Activated CD8-positive, alpha-beta T cell treated with anti-CD3 and anti-CD28 coated beads, Interleukin-2, amount 10 ng/mL, durations not matched to agents 7 days and 5 days (primary cell): ENCODE measurements at regions of chr12 and their contacts with region 1.

Region 1: DNA sequence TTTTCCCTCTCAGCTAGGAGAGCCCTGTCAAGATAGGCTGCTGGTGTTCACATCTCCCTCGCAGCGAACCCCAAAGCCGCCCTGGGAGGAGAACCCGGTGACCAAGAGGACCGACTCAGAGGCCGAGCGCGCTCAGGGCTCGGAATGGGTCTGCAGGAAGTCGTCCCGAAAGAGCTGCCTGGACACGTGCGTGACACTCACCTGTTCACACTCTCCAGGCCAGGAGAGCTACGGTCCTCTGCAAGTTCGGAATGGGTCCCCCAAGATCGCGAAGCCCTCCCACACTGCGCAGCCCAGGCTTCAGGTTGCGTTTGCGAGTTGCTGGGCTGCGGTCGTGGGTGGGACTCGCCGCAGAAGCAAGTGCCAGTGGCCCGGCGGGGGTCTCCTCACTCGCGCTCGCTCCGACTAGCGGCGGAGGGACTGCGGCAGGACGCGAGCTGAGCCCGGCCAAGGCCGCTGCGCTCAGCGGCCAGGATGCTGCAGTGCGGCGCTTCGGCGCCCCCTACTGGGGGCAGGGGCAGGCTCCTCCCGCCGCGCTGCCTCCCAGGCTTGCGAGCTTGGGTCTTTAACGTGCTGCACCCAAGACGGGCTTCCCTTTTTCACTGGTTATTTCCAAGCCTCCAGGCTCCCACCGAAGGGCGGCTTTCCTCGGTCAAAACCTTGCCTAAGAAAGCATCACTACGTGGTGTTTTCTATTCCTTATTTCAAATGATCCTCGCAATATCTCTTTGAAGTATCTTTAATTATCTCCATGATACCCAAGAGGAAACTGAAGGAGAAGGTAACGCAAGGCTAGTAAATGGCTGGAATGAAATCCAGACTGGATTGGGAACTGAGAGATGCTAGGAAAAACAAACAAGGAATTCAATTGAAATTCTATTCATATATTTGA is at the start of gene RERG:
- DNase-seq: peak; percentile 76
- ATAC-seq: peak; percentile 100
- H3K4me3 Mint-ChIP-seq: peak within 1 kb of the TSS; percentile 52
- H3K27ac Mint-ChIP-seq: no peak within 1 kb of the TSS
- H3K4me1 Mint-ChIP-seq: peaks cover 6% of the 10 kb centered on the region
- H3K27me3 Mint-ChIP-seq: peaks cover 35% of the 10 kb centered on the region
- total RNA-seq, gene RERG: not detected

Region 2: GRCh38 chr12:14723763-14724162 is 497.5 kb before region 1 on chr12:
- CTCF ChIA-PET with region 1: interaction called, 21 read pairs
- POLR2A ChIA-PET with region 1: no interaction called
- DNase-seq: peak; percentile 68
- ATAC-seq: peak; percentile 76
- H3K4me3 Mint-ChIP-seq: no peak overlapping the region
- H3K27ac Mint-ChIP-seq: no peak overlapping the region
- H3K4me1 Mint-ChIP-seq: no peaks in the 10 kb centered on the region
- H3K27me3 Mint-ChIP-seq: peaks cover 3% of the 10 kb centered on the region

Region 3: GRCh38 chr12:14845350-14845750 is 375.9 kb before region 1 on chr12:
- CTCF ChIA-PET with region 1: interaction called, 18 read pairs
- POLR2A ChIA-PET with region 1: no interaction called
- DNase-seq: peak; percentile 61
- ATAC-seq: peak; percentile 53
- H3K4me3 Mint-ChIP-seq: no peak overlapping the region
- H3K27ac Mint-ChIP-seq: peak overlapping the region; percentile 0
- H3K4me1 Mint-ChIP-seq: peaks cover 4% of the 10 kb centered on the region
- H3K27me3 Mint-ChIP-seq: no peaks in the 10 kb centered on the region

Region 4: GRCh38 chr12:15186597-15186996 is 34.6 kb before region 1 on chr12:
- CTCF ChIA-PET with region 1: interaction called, 19 read pairs
- POLR2A ChIA-PET with region 1: no interaction called
- DNase-seq: no peak
- ATAC-seq: no peak
- H3K4me3 Mint-ChIP-seq: no peak overlapping the region
- H3K27ac Mint-ChIP-seq: no peak overlapping the region
- H3K4me1 Mint-ChIP-seq: no peaks in the 10 kb centered on the region
- H3K27me3 Mint-ChIP-seq: peaks cover 4% of the 10 kb centered on the region

Region 5: GRCh38 chr12:15196678-15197505 is 24.3 kb before region 1 on chr12:
- CTCF ChIA-PET with region 1: interaction called, 15 read pairs
- POLR2A ChIA-PET with region 1: no interaction called
- DNase-seq: no peak
- ATAC-seq: no peak
- H3K4me3 Mint-ChIP-seq: no peak overlapping the region
- H3K27ac Mint-ChIP-seq: no peak overlapping the region
- H3K4me1 Mint-ChIP-seq: no peaks in the 10 kb centered on the region
- H3K27me3 Mint-ChIP-seq: peaks cover 10% of the 10 kb centered on the region

Region 6: DNA sequence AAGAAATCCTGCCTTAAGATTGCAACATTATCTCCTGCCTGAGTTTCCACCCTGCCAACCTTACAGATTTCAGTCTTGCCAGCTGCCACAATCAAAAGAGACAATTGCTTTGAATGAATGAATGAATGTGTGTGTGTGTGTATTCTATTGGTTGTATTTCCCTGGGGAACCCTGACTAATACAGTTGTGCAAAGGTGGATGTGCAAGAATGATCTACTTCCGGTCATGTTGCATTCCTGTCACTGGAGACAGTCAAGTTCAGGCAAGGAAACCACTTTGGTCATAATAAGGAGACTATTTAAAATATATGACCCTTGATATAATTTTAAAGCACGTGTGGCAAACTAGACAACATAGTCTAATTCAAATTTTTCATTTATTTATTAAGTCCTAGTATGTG is 13.1 kb before region 1 on chr12:
- CTCF ChIA-PET with region 1: interaction called, 14 read pairs
- POLR2A ChIA-PET with region 1: no interaction called
- DNase-seq: no peak
- ATAC-seq: no peak
- H3K4me3 Mint-ChIP-seq: no peak overlapping the region
- H3K27ac Mint-ChIP-seq: no peak overlapping the region
- H3K4me1 Mint-ChIP-seq: no peaks in the 10 kb centered on the region
- H3K27me3 Mint-ChIP-seq: peaks cover 13% of the 10 kb centered on the region

Region 7: GRCh38 chr12:15268927-15269552 is 47.8 kb after region 1 on chr12:
- CTCF ChIA-PET with region 1: interaction called, 12 read pairs
- POLR2A ChIA-PET with region 1: no interaction called
- DNase-seq: peak; percentile 51
- ATAC-seq: peak; percentile 75
- H3K4me3 Mint-ChIP-seq: no peak overlapping the region
- H3K27ac Mint-ChIP-seq: no peak overlapping the region
- H3K4me1 Mint-ChIP-seq: no peaks in the 10 kb centered on the region
- H3K27me3 Mint-ChIP-seq: peaks cover 3% of the 10 kb centered on the region